ENCODE measurements at regions of chr2 and their contacts with region 1.

Region 1: DNA sequence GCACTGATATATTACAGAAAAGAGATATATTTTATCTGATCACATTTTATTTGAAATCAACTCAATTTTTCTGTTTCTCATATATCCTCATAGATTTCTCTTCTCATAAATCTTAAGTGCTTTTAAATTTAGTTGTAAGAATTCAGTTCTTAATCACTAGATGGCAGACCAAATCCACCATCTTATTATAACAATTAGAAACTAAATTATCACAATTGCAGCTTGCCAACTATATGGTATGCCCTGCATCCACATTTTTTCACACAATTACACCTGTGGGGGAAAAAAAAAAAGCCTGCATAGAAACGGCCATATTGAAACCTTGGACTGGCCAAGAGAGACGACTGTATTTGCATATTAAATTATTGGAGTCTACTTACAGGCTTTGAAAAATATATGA is 64.4 kb downstream of the COL5A2 start:
- DNase-seq: peak; percentile 12
- ATAC-seq: no peak
- H3K4me3 ChIP-seq: no peak overlapping the region
- H3K27ac ChIP-seq: no peak overlapping the region
- H3K4me1 ChIP-seq: peaks cover 0 to 1% of the 10 kb centered on the region in 2 experiments; a peak in 2 of 4 replicates
- H3K27me3 ChIP-seq: no peaks in the 10 kb centered on the region
- CTCF ChIP-seq: peak in 1 of 3 experiments; percentile 48; a peak in 2 of 6 replicates
- POLR2A ChIP-seq: no peak
- RAD21 ChIP-seq: peak; percentile 65

Region 2: DNA sequence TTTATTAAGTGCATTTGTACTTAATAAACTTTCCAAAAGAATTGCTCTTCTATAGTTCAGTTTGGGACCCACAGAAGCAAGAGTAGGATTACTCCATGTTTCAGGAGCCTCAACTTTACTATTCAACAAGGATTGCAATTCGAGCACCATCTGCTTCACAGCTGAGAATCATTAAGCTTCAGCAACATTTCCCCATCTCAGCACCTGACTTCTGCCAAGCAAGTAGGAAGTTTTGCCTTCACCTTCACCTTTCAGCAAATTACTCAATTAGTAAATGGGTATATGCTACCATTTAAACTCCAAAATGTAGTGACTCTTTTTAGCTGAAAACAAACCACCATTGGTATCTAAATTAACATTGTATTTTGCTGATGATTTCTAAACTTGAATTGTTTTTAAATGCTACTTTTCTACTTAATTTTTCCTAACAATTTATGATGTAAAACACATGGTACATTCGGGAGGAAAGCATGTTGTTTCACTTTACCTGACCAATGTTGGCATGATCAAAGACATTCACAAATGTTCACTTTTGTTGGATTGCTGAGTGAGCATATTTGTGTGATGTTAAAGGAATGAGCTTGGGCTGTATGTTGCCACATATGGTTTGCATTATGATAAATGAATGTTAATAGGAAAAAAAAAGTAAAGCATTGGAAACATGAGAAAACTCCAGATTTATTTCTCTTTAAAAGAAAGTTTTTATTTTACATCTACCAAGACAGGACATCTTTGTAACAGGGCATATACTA is 664.2 kb before region 1 on chr2:
- CTCF ChIA-PET with region 1: no interaction called
- POLR2A ChIA-PET with region 1: no interaction called
- RAD21 ChIA-PET with region 1: no interaction called
- intact Hi-C with region 1: no loop called
- DNase-seq: no peak
- ATAC-seq: no peak
- H3K4me3 ChIP-seq: no peak overlapping the region
- H3K27ac ChIP-seq: no peak overlapping the region
- H3K4me1 ChIP-seq: no peaks in the 10 kb centered on the region
- H3K27me3 ChIP-seq: no peaks in the 10 kb centered on the region
- CTCF ChIP-seq: no peak
- POLR2A ChIP-seq: no peak
- RAD21 ChIP-seq: no peak

Region 3: DNA sequence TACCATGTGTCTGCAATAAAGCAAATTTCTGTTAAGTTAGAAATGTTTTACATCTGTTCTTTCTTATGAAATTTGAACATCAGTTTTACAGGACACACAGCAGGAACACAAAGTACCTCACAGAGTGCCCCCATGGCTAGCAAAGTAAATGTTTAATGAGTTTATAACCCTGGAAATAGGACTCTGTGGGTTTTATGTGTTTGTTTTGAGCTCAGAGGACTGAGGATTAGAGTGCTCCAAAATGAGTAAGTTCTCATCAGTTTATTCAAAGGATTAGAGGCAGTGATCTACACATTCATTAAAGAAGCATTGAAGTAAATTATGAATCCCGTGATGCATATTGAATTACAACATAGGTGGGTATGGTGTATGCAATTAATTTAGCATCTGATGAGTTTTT is 541.7 kb before region 1 on chr2:
- CTCF ChIA-PET with region 1: no interaction called
- POLR2A ChIA-PET with region 1: no interaction called
- RAD21 ChIA-PET with region 1: no interaction called
- intact Hi-C with region 1: no loop called
- DNase-seq: no peak
- ATAC-seq: no peak
- H3K4me3 ChIP-seq: no peak overlapping the region
- H3K27ac ChIP-seq: no peak overlapping the region
- H3K4me1 ChIP-seq: no peaks in the 10 kb centered on the region
- H3K27me3 ChIP-seq: no peaks in the 10 kb centered on the region
- CTCF ChIP-seq: no peak
- POLR2A ChIP-seq: no peak
- RAD21 ChIP-seq: no peak

Region 4: GRCh38 chr2:189129971-189130370 is 14.8 kb after region 1 on chr2:
- CTCF ChIA-PET with region 1: no interaction called
- POLR2A ChIA-PET with region 1: no interaction called
- RAD21 ChIA-PET with region 1: no interaction called
- intact Hi-C with region 1: no loop called
- DNase-seq: no peak
- ATAC-seq: no peak
- H3K4me3 ChIP-seq: no peak overlapping the region
- H3K27ac ChIP-seq: no peak overlapping the region
- H3K4me1 ChIP-seq: no peaks in the 10 kb centered on the region
- H3K27me3 ChIP-seq: no peaks in the 10 kb centered on the region
- CTCF ChIP-seq: no peak
- POLR2A ChIP-seq: no peak
- RAD21 ChIP-seq: no peak

Region 5: GRCh38 chr2:189287982-189288521 is 172.9 kb after region 1 on chr2:
- CTCF ChIA-PET with region 1: interaction called, 9 read pairs
- POLR2A ChIA-PET with region 1: no interaction called
- RAD21 ChIA-PET with region 1: interaction called, 5 to 7 read pairs
- intact Hi-C with region 1: loop called (anchors 5 kb)
- DNase-seq: peak; percentile 34
- ATAC-seq: peak; percentile 76
- H3K4me3 ChIP-seq: no peak overlapping the region
- H3K27ac ChIP-seq: no peak overlapping the region
- H3K4me1 ChIP-seq: no peaks in the 10 kb centered on the region
- H3K27me3 ChIP-seq: no peaks in the 10 kb centered on the region
- CTCF ChIP-seq: peak; percentile 38 to 89 (median 57); a peak in 5 of 6 replicates
- POLR2A ChIP-seq: no peak
- RAD21 ChIP-seq: peak; percentile 82

Measured in HCT116 (cell line).